A549 (cell line): ENCODE measurements at regions of chr16 and their contacts with region 1.

Region 1: GRCh38 chr16:77987810-77988209 is 34.5 kb upstream of the CLEC3A start:
- DNase-seq: no peak
- ATAC-seq: no peak
- H3K4me3 ChIP-seq: no peak overlapping the region
- H3K27ac ChIP-seq: no peak overlapping the region
- H3K4me1 ChIP-seq: no peaks in the 10 kb centered on the region
- CTCF ChIP-seq: no peak
- EP300 ChIP-seq: no peak
- POLR2A ChIP-seq: no peak
- RAD21 ChIP-seq: no peak

Region 2: GRCh38 chr16:78002915-78003538 is 15.2 kb after region 1 on chr16:
- CTCF ChIA-PET with region 1: interaction called, 18 read pairs
- POLR2A ChIA-PET with region 1: no interaction called
- DNase-seq: peak; percentile 72 to 87
- ATAC-seq: peak; percentile 81 to 96
- H3K4me3 ChIP-seq: no peak overlapping the region
- H3K27ac ChIP-seq: no peak overlapping the region
- H3K4me1 ChIP-seq: no peaks in the 10 kb centered on the region
- CTCF ChIP-seq: peak; percentile 63
- EP300 ChIP-seq: no peak
- POLR2A ChIP-seq: no peak
- RAD21 ChIP-seq: peak; percentile 67 to 74

Region 3: GRCh38 chr16:78045865-78046581 is 58.2 kb after region 1 on chr16:
- CTCF ChIA-PET with region 1: no interaction called
- POLR2A ChIA-PET with region 1: no interaction called
- DNase-seq: peak; percentile 16 to 36
- ATAC-seq: peak; percentile 90 to 92
- H3K4me3 ChIP-seq: no peak overlapping the region
- H3K27ac ChIP-seq: no peak overlapping the region
- H3K4me1 ChIP-seq: no peaks in the 10 kb centered on the region
- CTCF ChIP-seq: no peak
- EP300 ChIP-seq: no peak
- POLR2A ChIP-seq: no peak
- RAD21 ChIP-seq: no peak